ENCODE measurements at regions of chr19 and their contacts with region 1.

Region 1: GRCh38 chr19:43519436-43520088 is 7.4 kb downstream of the ETHE1 start:
- DNase-seq: peak; percentile 81
- ATAC-seq: peak; percentile 49
- H3K4me3 Mint-ChIP-seq: no peak overlapping the region
- H3K27ac Mint-ChIP-seq: no peak overlapping the region
- H3K4me1 Mint-ChIP-seq: peaks cover 13% of the 10 kb centered on the region
- H3K27me3 Mint-ChIP-seq: no peaks in the 10 kb centered on the region

Region 2: GRCh38 chr19:43425567-43426392 is 93.8 kb before region 1 on chr19:
- CTCF ChIA-PET with region 1: interaction called, 73 read pairs
- DNase-seq: no peak
- ATAC-seq: no peak
- H3K4me3 Mint-ChIP-seq: no peak overlapping the region
- H3K27ac Mint-ChIP-seq: no peak overlapping the region
- H3K4me1 Mint-ChIP-seq: peaks cover 10% of the 10 kb centered on the region
- H3K27me3 Mint-ChIP-seq: peaks cover 6% of the 10 kb centered on the region

Region 3: DNA sequence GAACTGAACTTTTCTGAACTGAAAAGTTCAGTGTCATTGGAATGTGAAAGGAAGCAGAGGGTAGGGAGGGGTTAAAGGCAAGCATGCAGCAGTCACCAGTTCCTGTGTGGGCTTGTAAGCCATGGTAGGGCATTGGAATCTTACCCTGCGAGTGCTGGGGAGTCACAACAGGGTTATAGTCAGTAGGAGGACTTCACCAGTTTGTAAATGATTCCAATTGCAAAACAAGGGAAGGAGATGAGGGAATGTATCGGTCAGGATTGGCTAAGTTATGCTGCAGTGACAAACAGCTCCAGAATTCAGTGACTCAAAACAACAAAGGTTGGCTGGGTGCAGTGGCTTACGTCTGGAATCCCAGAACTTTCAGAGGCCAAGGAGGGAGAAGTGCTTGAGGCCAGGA is 67.0 kb before region 1 on chr19:
- CTCF ChIA-PET with region 1: interaction called, 274 read pairs
- DNase-seq: no peak
- ATAC-seq: no peak
- H3K4me3 Mint-ChIP-seq: no peak overlapping the region
- H3K27ac Mint-ChIP-seq: no peak overlapping the region
- H3K4me1 Mint-ChIP-seq: peaks cover 8% of the 10 kb centered on the region
- H3K27me3 Mint-ChIP-seq: peaks cover 4% of the 10 kb centered on the region

Region 4: GRCh38 chr19:43482193-43482592 is 37.4 kb before region 1 on chr19:
- CTCF ChIA-PET with region 1: interaction called, 12 read pairs
- DNase-seq: no peak
- ATAC-seq: no peak
- H3K4me3 Mint-ChIP-seq: no peak overlapping the region
- H3K27ac Mint-ChIP-seq: no peak overlapping the region
- H3K4me1 Mint-ChIP-seq: no peaks in the 10 kb centered on the region
- H3K27me3 Mint-ChIP-seq: no peaks in the 10 kb centered on the region

Region 5: GRCh38 chr19:43532962-43533545 is 13.5 kb after region 1 on chr19 and contains the start of gene ZNF575:
- CTCF ChIA-PET with region 1: interaction called, 26 read pairs
- DNase-seq: peak; percentile 93
- ATAC-seq: peak; percentile 67
- H3K4me3 Mint-ChIP-seq: peak within 1 kb of the TSS; percentile 94
- H3K27ac Mint-ChIP-seq: peak within 1 kb of the TSS; percentile 98
- H3K4me1 Mint-ChIP-seq: peaks cover 19% of the 10 kb centered on the region
- H3K27me3 Mint-ChIP-seq: no peaks in the 10 kb centered on the region
- total RNA-seq, gene ZNF575: 2.9 to 3.7 TPM

Region 6: GRCh38 chr19:43667573-43668405 is 148.2 kb after region 1 on chr19:
- CTCF ChIA-PET with region 1: no interaction called
- DNase-seq: peak; percentile 41
- ATAC-seq: no peak
- H3K4me3 Mint-ChIP-seq: peak overlapping the region; percentile 82
- H3K27ac Mint-ChIP-seq: peak overlapping the region; percentile 85
- H3K4me1 Mint-ChIP-seq: peaks cover 40% of the 10 kb centered on the region
- H3K27me3 Mint-ChIP-seq: peaks cover 12% of the 10 kb centered on the region

Region 7: GRCh38 chr19:43754503-43755255 is 235.1 kb after region 1 on chr19 and contains the start of gene SMG9:
- CTCF ChIA-PET with region 1: no interaction called
- DNase-seq: peak; percentile 98
- ATAC-seq: peak; percentile 87
- H3K4me3 Mint-ChIP-seq: peak within 1 kb of the TSS; percentile 89
- H3K27ac Mint-ChIP-seq: peak within 1 kb of the TSS; percentile 98
- H3K4me1 Mint-ChIP-seq: peaks cover 65% of the 10 kb centered on the region
- H3K27me3 Mint-ChIP-seq: no peaks in the 10 kb centered on the region
- total RNA-seq, gene SMG9: 62.3 to 74.7 TPM